ENCODE measurements at regions of chr11 and their contacts with region 1.

Region 1: GRCh38 chr11:111777094-111778046 is 11.2 kb upstream of the PPP2R1B start:
- DNase-seq: peak in 1 of 5 donors; percentile 37
- ATAC-seq: peak; percentile 72 to 82 (median 79)
- H3K4me3 ChIP-seq: no peak overlapping the region
- H3K27ac ChIP-seq: peak overlapping the region in 1 of 12 donors; percentile 11
- H3K4me1 ChIP-seq: peaks cover 0 to 17% (median 12%) of the 10 kb centered on the region in 12 donors
- H3K27me3 ChIP-seq: no peaks in the 10 kb centered on the region
- CTCF ChIP-seq: peak; percentile 60 to 87 (median 84)
- POLR2A ChIP-seq: no peak

Region 2: DNA sequence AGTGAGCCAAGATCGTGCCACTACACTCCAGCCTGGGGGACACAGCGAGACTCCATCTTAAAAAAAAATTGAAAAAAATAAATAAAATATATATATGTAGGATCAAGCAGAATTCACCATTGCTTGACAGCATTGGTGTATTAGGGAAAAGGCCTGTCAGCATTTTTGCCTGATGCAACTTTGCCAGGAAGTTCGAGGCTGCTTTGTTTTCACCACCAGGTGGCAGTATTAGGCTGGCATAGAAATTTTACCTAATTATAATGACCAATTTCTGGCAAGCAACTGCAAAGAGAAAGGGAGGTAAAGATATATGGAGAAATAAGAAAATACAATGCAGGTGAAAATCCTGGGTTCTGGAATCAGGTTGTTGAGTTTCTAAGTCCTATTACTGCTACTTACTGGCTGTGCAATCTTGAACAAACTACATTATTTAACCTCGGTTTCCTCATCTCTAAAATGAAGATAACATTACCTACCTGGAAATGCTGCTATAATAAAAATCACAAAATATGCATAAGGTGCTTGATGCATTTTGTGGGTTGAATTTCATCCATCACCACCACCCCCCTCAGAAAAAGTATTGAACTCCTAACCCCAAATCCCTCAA is 212.2 kb before region 1 on chr11:
- intact Hi-C with region 1: loop called in 5 of 10 experiments (anchors 1 to 5 kb)
- DNase-seq: peak in 4 of 5 donors; percentile 48 to 64 (median 56)
- ATAC-seq: peak in 2 of 4 donors; percentile 52 to 63
- H3K4me3 ChIP-seq: no peak overlapping the region
- H3K27ac ChIP-seq: no peak overlapping the region
- H3K4me1 ChIP-seq: peaks cover 0 to 15% (median 0%) of the 10 kb centered on the region in 12 donors
- H3K27me3 ChIP-seq: no peaks in the 10 kb centered on the region
- CTCF ChIP-seq: peak; percentile 77 to 96 (median 92)
- POLR2A ChIP-seq: no peak

Region 3: GRCh38 chr11:111586388-111586831 is 191.0 kb before region 1 on chr11:
- intact Hi-C with region 1: loop called in 4 of 10 experiments (anchors 5 kb)
- DNase-seq: no peak
- ATAC-seq: peak in 3 of 4 donors; percentile 42 to 62 (median 49)
- H3K4me3 ChIP-seq: no peak overlapping the region
- H3K27ac ChIP-seq: no peak overlapping the region
- H3K4me1 ChIP-seq: peaks cover 0 to 5% (median 0%) of the 10 kb centered on the region in 12 donors
- H3K27me3 ChIP-seq: no peaks in the 10 kb centered on the region
- CTCF ChIP-seq: peak; percentile 27 to 71 (median 56)
- POLR2A ChIP-seq: no peak

Region 4: GRCh38 chr11:111601979-111602864 is 175.1 kb before region 1 on chr11 and contains the start of gene SIK2:
- intact Hi-C with region 1: loop called in 9 of 10 experiments (anchors 1 to 5 kb)
- DNase-seq: peak; percentile 96 to 97 (median 97)
- ATAC-seq: peak; percentile 95 to 98 (median 96)
- H3K4me3 ChIP-seq: peak within 1 kb of the TSS; percentile 69 to 96 (median 87)
- H3K27ac ChIP-seq: peak within 1 kb of the TSS; percentile 91 to 99 (median 96)
- H3K4me1 ChIP-seq: peaks cover 3 to 45% (median 25%) of the 10 kb centered on the region in 12 donors
- H3K27me3 ChIP-seq: no peaks in the 10 kb centered on the region
- CTCF ChIP-seq: peak; percentile 77 to 98 (median 96)
- POLR2A ChIP-seq: peak in 1 of 2 donors; percentile 51
- total RNA-seq, gene SIK2: 15.9 to 45.8 (median 27.7) TPM

Region 5: DNA sequence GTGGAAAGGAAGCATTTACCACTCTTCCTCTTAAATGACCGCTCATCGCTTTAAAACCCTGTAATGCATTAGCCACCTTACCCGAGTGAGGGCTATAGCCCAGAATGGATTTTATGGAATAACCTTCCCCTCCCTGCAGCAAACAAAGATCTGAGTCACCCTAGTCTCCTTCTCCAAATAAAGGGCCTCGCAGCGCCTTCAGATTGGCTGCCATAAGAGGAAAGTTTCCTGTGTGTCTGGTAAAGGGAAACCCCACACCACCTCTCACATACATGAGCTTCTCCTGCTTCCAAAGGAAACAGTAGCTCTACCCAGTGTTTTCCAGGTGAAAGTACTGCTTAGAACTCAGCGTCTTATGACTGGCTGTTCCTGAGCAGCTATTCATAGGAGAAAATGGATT is 58.9 kb before region 1 on chr11:
- intact Hi-C with region 1: loop called in 1 of 10 experiments (anchors 10 kb)
- DNase-seq: no peak
- ATAC-seq: peak in 3 of 4 donors; percentile 46 to 61 (median 54)
- H3K4me3 ChIP-seq: no peak overlapping the region
- H3K27ac ChIP-seq: peak overlapping the region in 2 of 12 donors; percentile 32 to 55
- H3K4me1 ChIP-seq: peaks cover 0 to 31% (median 4%) of the 10 kb centered on the region in 12 donors
- H3K27me3 ChIP-seq: no peaks in the 10 kb centered on the region
- CTCF ChIP-seq: no peak
- POLR2A ChIP-seq: no peak

Region 6: DNA sequence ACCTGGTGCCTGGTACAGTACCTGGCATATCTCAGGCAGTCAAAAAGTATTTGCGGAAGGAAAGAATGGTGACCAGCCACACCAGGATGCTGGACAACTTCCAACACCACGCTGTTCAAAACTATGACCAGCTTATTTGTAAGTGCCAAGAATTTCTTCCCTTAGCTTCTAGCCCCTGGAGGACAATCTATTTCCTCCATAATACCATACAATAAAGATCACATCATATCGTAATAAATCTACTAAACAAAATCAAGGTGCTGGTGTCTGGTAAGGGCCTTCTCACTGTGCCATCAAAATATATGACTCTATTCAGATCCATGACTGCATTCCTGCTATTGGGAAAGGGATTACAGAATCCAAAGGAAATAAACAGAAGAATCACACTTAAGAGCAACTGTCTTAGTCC is 42.5 kb after region 1 on chr11:
- intact Hi-C with region 1: loop called in 1 of 10 experiments (anchors 5 kb)
- DNase-seq: no peak
- ATAC-seq: peak in 2 of 4 donors; percentile 23 to 29
- H3K4me3 ChIP-seq: no peak overlapping the region
- H3K27ac ChIP-seq: peak overlapping the region; percentile 44 to 91 (median 74)
- H3K4me1 ChIP-seq: peaks cover 5 to 27% (median 20%) of the 10 kb centered on the region in 12 donors
- H3K27me3 ChIP-seq: no peaks in the 10 kb centered on the region
- CTCF ChIP-seq: no peak
- POLR2A ChIP-seq: no peak

Region 7: DNA sequence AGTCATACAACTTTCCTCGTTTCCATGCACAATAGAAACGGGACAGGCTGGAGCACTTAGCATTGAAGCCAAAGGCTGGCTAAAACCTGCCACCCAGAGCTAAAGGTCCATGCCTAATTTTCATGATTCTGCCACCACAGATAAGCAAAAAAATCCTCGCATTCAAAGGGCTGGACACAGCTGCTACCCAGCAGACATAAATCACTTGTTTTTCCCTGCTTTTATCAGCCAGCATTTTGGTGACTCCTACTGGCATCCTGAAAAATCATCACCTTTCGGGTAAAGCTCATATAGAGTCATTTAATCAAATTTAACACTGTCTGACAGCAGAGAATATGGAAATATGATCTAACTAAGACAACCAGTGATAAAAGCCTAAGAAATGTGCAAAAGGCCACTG is 56.2 kb after region 1 on chr11:
- intact Hi-C with region 1: loop called in 4 of 10 experiments (anchors 5 to 10 kb)
- DNase-seq: no peak
- ATAC-seq: peak in 1 of 4 donors; percentile 47
- H3K4me3 ChIP-seq: no peak overlapping the region
- H3K27ac ChIP-seq: no peak overlapping the region
- H3K4me1 ChIP-seq: peaks cover 0 to 7% (median 0%) of the 10 kb centered on the region in 12 donors
- H3K27me3 ChIP-seq: no peaks in the 10 kb centered on the region
- CTCF ChIP-seq: peak in 7 of 12 donors; percentile 10 to 41 (median 21)
- POLR2A ChIP-seq: no peak

Measured in heart left ventricle (tissue), 16 donors.